Gastrocnemius medialis (tissue), 4 donors: ENCODE measurements at regions of chr7 and their contacts with region 1.

Region 1: GRCh38 chr7:102236592-102237287 is 49.9 kb upstream of the SH2B2 start:
- DNase-seq: peak; percentile 26 to 52
- ATAC-seq: peak; percentile 71 to 93
- H3K4me3 ChIP-seq: no peak overlapping the region
- H3K27ac ChIP-seq: no peak overlapping the region
- H3K4me1 ChIP-seq: peaks cover 0 to 3% of the 10 kb centered on the region in 2 donors
- H3K27me3 ChIP-seq: no peaks in the 10 kb centered on the region
- CTCF ChIP-seq: peak; percentile 77 to 83 (median 81)
- POLR2A ChIP-seq: no peak

Region 2: DNA sequence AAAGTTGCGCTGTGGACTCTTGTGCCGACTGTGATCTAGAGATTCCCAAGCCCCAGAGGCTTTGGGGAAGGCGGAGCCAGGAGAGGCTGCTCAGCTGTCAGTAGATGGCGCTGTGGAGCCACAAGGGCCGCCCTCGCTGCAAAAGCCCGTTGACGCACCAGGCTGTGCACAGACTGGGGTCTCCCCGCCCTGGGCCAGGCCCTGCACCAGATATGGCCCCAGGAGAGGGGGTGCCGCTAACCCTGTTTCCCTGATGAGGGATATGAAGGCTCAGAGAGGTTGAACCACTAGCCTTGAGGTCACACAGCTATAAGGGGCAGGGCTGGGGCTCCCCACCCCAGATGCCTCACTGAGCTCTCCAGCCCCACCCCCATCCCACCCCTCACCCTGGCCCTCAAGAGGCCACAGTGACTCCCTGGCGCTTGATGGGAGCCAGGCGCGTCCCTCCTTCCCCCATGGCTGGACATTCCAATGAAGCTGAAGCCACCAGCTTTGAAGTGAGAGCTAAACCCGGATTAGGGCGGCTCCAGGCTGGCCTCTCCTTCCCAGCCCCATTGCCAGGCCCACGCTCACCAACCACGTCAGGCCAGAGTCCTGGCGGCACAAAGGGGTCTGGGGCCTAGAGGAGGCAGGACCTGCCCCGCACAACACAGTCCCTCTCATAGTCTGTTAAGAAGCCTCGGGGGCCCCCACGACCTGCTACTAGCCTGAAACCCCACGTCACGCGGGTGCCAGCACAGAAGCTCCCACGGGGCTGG is 634.1 kb before region 1 on chr7:
- in situ Hi-C with region 1: no loop called
- intact Hi-C with region 1: loop called (anchors 10 kb)
- DNase-seq: peak; percentile 24 to 53
- ATAC-seq: peak; percentile 87 to 91
- H3K4me3 ChIP-seq: no peak overlapping the region
- H3K27ac ChIP-seq: no peak overlapping the region
- H3K4me1 ChIP-seq: peaks cover 0 to 4% of the 10 kb centered on the region in 2 donors
- H3K27me3 ChIP-seq: no peaks in the 10 kb centered on the region
- CTCF ChIP-seq: peak; percentile 65 to 92 (median 84)
- POLR2A ChIP-seq: no peak

Region 3: DNA sequence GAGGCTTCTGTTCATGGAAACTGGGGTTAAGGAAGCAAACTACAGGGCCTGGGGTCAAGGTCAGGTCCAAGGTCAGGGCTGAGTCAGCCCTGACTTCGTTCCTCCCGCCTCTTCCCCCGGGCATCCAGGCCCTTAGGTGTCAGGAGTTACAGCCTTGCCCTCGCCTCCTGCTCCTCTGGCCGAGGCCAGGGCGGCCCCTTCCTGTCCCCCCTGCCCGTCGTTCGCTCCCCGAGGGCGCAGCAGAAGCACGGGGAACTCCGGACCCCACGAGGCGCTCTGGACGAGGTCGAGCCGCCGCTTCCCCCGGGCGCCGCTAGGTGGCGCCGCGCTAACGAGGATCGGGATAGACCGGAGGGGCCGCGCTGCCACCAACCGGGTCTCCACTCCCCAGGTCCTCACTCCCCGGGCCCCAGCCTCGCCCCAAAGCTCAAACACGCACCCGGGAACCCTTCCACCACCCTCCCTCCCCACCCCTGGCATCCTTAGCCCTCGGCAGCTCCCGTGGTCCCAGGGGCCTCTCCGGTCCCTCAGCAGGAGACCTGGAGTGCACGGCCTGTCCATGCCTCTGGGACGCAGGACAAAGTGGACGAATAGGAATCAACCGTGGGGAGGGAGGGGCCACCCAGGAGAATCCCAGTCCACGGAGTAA is 548.4 kb before region 1 on chr7:
- in situ Hi-C with region 1: loop called in 1 of 4 experiments (anchors 25 kb)
- intact Hi-C with region 1: loop called (anchors 1 kb)
- DNase-seq: peak; percentile 40 to 60
- ATAC-seq: peak; percentile 80 to 82
- H3K4me3 ChIP-seq: peak overlapping the region; percentile 23 to 37 (median 28)
- H3K27ac ChIP-seq: no peak overlapping the region
- H3K4me1 ChIP-seq: peaks cover 5 to 6% of the 10 kb centered on the region in 2 donors
- H3K27me3 ChIP-seq: no peaks in the 10 kb centered on the region
- CTCF ChIP-seq: peak; percentile 90 to 98 (median 96)
- POLR2A ChIP-seq: no peak

Region 4: DNA sequence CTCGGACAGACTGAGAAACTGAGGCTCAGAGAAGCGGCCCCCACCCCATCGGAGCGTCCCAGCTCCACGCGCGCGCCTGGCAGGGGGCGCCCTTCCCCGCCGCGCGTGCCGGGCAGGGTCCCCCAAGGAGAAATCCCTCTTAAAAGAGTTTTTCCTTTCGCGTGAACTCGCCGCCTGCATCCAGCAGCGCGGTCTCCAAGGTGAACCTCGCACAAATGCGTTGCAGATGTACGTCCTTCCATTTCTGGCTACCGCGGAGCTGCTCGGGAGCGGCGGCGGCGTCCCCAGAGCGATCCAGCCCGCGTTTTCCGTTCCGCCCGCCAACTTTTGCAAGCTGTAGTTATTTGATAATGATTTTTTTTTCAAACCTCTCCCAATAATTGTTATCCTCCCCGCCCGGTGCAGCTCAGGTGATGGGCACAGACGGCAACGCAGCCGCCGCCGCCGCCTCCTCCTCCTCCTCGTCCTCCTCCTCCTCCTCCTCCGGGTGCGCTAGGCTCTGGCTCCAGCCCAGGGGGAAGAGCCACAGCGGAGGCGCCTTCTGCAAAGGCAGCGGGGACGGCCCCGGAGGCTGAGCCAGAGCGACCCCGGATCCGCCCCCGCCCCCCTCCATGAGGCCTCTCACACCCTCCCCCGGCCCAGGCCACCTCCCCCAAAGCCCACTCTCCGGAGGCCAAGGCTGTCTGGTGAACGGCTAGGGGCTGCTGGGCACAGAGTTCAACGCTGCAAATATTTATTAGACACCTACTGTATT is 493.3 kb before region 1 on chr7:
- in situ Hi-C with region 1: no loop called
- intact Hi-C with region 1: loop called (anchors 10 kb)
- DNase-seq: no peak
- ATAC-seq: peak; percentile 64 to 75
- H3K4me3 ChIP-seq: peak overlapping the region; percentile 47 to 71 (median 58)
- H3K27ac ChIP-seq: no peak overlapping the region
- H3K4me1 ChIP-seq: peaks cover 0 to 4% of the 10 kb centered on the region in 2 donors
- H3K27me3 ChIP-seq: peaks cover 7 to 20% (median 8%) of the 10 kb centered on the region in 3 donors
- CTCF ChIP-seq: peak; percentile 23 to 68 (median 50)
- POLR2A ChIP-seq: no peak

Region 5: GRCh38 chr7:101848208-101848951 is 388.4 kb before region 1 on chr7:
- in situ Hi-C with region 1: loop called in 2 of 4 experiments (anchors 25 kb)
- intact Hi-C with region 1: no loop called
- DNase-seq: no peak
- ATAC-seq: no peak
- H3K4me3 ChIP-seq: no peak overlapping the region
- H3K27ac ChIP-seq: no peak overlapping the region
- H3K4me1 ChIP-seq: peaks cover 0 to 23% of the 10 kb centered on the region in 2 donors
- H3K27me3 ChIP-seq: no peaks in the 10 kb centered on the region
- CTCF ChIP-seq: no peak
- POLR2A ChIP-seq: no peak

Region 6: DNA sequence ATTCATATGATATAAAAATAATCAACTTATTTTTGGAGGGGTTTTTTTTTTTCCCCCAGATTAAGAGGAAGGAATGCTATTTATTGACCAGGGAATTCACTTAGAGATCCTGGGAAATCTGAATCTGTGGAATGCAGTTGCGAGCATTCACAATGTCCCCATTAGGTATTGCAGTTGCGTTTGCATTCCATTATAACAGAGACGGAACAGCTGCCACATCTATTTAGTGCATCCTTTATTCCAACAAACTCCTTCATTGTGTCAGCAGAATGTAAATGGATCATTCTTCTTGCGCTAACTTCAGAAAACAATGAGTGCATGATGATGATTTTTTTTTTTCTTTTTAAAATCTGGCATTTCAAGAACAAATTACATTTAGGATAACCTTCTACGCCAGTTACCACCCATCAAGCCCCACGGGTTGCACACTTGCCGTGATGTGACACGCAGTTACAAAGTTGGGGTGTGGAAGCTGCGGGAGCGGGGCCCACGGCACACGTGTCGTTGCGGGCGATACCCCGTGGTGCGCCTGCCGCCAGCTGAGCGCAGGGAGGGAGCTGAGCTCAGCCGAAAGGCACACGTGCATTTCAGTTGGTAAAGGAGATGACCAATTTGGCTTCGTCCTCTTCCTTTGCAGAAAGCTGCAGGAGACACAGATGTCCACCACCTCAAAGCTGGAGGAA is 125.5 kb before region 1 on chr7:
- in situ Hi-C with region 1: no loop called
- intact Hi-C with region 1: loop called (anchors 10 kb)
- DNase-seq: no peak
- ATAC-seq: no peak
- H3K4me3 ChIP-seq: no peak overlapping the region
- H3K27ac ChIP-seq: no peak overlapping the region
- H3K4me1 ChIP-seq: peaks cover 0 to 7% of the 10 kb centered on the region in 2 donors
- H3K27me3 ChIP-seq: no peaks in the 10 kb centered on the region
- CTCF ChIP-seq: no peak
- POLR2A ChIP-seq: no peak

Region 7: DNA sequence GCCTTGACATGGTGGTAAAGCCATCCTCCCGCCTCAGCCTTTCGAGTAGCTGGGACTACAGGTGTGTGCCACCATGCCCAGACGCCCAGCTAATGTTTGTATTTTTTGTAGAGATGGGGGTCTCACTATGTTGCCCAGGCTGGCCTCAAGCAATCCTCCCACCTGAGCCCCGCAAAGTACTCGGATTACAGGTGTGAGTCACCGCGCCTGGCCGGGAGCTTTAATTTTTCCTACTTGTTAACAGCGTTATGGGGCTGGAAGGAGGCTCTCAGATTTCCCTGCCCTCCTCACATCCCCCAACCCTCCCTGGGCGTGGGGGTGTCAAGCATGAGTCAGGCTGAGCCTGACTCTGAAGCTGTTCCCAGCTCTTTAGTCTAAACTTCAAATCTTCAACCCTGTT is 219.6 kb after region 1 on chr7:
- in situ Hi-C with region 1: no loop called
- intact Hi-C with region 1: no loop called
- DNase-seq: no peak
- ATAC-seq: no peak
- H3K4me3 ChIP-seq: no peak overlapping the region
- H3K27ac ChIP-seq: no peak overlapping the region
- H3K4me1 ChIP-seq: no peaks in the 10 kb centered on the region
- H3K27me3 ChIP-seq: no peaks in the 10 kb centered on the region
- CTCF ChIP-seq: no peak
- POLR2A ChIP-seq: no peak